ENCODE measurements at regions of chr19 and their contacts with region 1.

Region 1: GRCh38 chr19:16441661-16442162 is 30.1 kb downstream of the EPS15L1 start:
- DNase-seq: peak in 1 of 2 experiments; percentile 78
- H3K4me3 ChIP-seq: no peak overlapping the region
- H3K27ac ChIP-seq: no peak overlapping the region
- H3K4me1 ChIP-seq: peaks cover 0 to 8% (median 2%) of the 10 kb centered on the region in 4 experiments; a peak in 4 of 7 replicates
- H3K27me3 ChIP-seq: no peaks in the 10 kb centered on the region
- CTCF ChIP-seq: peak; percentile 65 to 89 (median 86)
- EP300 ChIP-seq: no peak
- POLR2A ChIP-seq: no peak
- RAD21 ChIP-seq: peak; percentile 71 to 79

Region 2: GRCh38 chr19:16208064-16208759 is 233.5 kb before region 1 on chr19:
- CTCF ChIA-PET with region 1: no interaction called
- POLR2A ChIA-PET with region 1: no interaction called
- DNase-seq: no peak
- H3K4me3 ChIP-seq: no peak overlapping the region
- H3K27ac ChIP-seq: no peak overlapping the region
- H3K4me1 ChIP-seq: no peaks in the 10 kb centered on the region
- H3K27me3 ChIP-seq: no peaks in the 10 kb centered on the region
- CTCF ChIP-seq: no peak
- EP300 ChIP-seq: no peak
- POLR2A ChIP-seq: no peak
- RAD21 ChIP-seq: no peak

Region 3: DNA sequence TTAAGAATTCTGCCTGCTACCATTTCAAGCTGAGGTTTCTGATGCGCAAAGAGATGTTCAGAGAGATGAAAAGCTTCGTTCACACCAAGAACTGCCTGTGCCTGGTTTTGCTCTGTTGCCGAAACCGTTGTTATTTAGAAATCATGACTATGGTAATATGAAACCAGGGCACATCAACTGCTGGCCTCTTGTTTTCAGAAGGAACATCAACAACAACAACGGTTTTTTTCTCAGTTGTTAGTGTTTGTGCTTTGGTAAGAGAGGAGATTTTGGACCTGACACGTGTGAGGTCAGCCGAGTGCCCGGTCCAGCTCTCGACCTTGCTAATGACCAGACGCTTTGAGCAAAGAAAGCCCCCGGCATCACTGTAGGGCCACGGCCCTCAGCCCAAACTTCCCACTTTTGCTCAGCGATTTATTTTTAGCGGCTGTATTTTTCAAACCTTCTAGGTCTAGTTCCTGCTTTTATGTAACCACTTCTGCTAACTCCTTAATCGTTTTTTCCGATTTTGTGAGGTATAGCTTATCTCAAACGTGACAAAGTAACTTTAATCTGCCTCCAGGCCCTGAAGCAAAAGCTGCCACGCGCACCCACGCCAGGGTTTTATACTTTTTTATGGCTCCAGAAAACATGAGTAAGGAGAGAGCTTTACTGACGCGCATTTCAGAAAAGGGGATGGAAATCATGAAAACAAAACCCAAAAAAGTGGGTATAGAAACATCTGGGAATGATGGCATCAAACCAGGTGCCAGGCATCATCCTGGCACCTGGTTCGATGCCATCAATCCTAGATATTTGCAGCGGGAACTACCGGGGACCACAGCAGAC is 75.1 kb before region 1 on chr19:
- CTCF ChIA-PET with region 1: no interaction called
- POLR2A ChIA-PET with region 1: no interaction called
- DNase-seq: no peak
- H3K4me3 ChIP-seq: no peak overlapping the region
- H3K27ac ChIP-seq: no peak overlapping the region
- H3K4me1 ChIP-seq: peaks cover 0 to 6% (median 2%) of the 10 kb centered on the region in 4 experiments; a peak in 3 of 7 replicates
- H3K27me3 ChIP-seq: no peaks in the 10 kb centered on the region
- CTCF ChIP-seq: no peak
- EP300 ChIP-seq: no peak
- POLR2A ChIP-seq: no peak
- RAD21 ChIP-seq: no peak

Region 4: GRCh38 chr19:16417660-16418596 is 23.8 kb before region 1 on chr19:
- CTCF ChIA-PET with region 1: interaction called, 26 read pairs
- POLR2A ChIA-PET with region 1: no interaction called
- DNase-seq: peak; percentile 72 to 90
- H3K4me3 ChIP-seq: no peak overlapping the region
- H3K27ac ChIP-seq: no peak overlapping the region
- H3K4me1 ChIP-seq: peaks cover 0 to 6% (median 0%) of the 10 kb centered on the region in 4 experiments; a peak in 2 of 7 replicates
- H3K27me3 ChIP-seq: no peaks in the 10 kb centered on the region; a peak in 1 of 7 replicates
- CTCF ChIP-seq: peak; percentile 87 to 97 (median 92)
- EP300 ChIP-seq: no peak
- POLR2A ChIP-seq: no peak
- RAD21 ChIP-seq: peak; percentile 66 to 75

Region 5: GRCh38 chr19:16457195-16457953 is 15.7 kb after region 1 on chr19:
- CTCF ChIA-PET with region 1: interaction called, 66 read pairs
- POLR2A ChIA-PET with region 1: interaction called, 3 read pairs
- DNase-seq: peak in 1 of 2 experiments; percentile 54
- H3K4me3 ChIP-seq: no peak overlapping the region
- H3K27ac ChIP-seq: 0 out of 2 replicates have a peak overlapping the region, but pooled peaks have one; percentile 37
- H3K4me1 ChIP-seq: peaks cover 16 to 29% (median 23%) of the 10 kb centered on the region in 4 experiments
- H3K27me3 ChIP-seq: no peaks in the 10 kb centered on the region
- CTCF ChIP-seq: no peak
- EP300 ChIP-seq: no peak
- POLR2A ChIP-seq: no peak
- RAD21 ChIP-seq: no peak

Region 6: DNA sequence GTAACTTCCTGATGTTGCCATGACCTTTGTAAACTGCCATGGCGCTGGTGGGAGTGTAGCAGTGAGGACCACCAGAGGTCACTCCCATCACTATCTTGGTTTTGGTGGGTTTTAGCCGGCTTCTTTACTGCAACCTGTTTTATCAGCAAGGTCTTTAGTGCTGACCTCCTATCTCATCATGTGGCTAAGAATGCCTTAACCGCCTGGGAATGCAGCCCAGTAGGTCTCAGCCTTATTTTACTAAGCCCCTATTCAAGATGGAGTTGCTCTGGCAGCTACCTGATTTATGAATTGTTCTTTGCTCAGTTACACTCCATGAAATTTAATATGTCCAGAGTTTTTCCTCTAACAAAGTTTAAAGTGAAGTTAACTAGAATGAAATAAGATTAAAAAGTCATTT is 34.7 kb after region 1 on chr19:
- CTCF ChIA-PET with region 1: interaction called, 11 read pairs
- POLR2A ChIA-PET with region 1: no interaction called
- DNase-seq: no peak
- H3K4me3 ChIP-seq: no peak overlapping the region
- H3K27ac ChIP-seq: no peak overlapping the region
- H3K4me1 ChIP-seq: no peaks in the 10 kb centered on the region
- H3K27me3 ChIP-seq: no peaks in the 10 kb centered on the region
- CTCF ChIP-seq: peak in 1 of 3 experiments; percentile 3; a peak in 1 of 4 replicates
- EP300 ChIP-seq: no peak
- POLR2A ChIP-seq: no peak
- RAD21 ChIP-seq: no peak; a peak in 1 of 4 replicates

Region 7: GRCh38 chr19:16518483-16519229 is 76.9 kb after region 1 on chr19:
- CTCF ChIA-PET with region 1: interaction called, 67 read pairs
- POLR2A ChIA-PET with region 1: interaction called, 10 read pairs
- DNase-seq: no peak
- H3K4me3 ChIP-seq: no peak overlapping the region
- H3K27ac ChIP-seq: no peak overlapping the region
- H3K4me1 ChIP-seq: no peaks in the 10 kb centered on the region
- H3K27me3 ChIP-seq: no peaks in the 10 kb centered on the region
- CTCF ChIP-seq: peak; percentile 33 to 55 (median 45)
- EP300 ChIP-seq: no peak
- POLR2A ChIP-seq: no peak
- RAD21 ChIP-seq: peak; percentile 16 to 32; a peak in 3 of 4 replicates

Measured in H1 (cell line).